HEK293 (cell line): ENCODE measurements at regions of chr22 and their contacts with region 1.

Region 1: DNA sequence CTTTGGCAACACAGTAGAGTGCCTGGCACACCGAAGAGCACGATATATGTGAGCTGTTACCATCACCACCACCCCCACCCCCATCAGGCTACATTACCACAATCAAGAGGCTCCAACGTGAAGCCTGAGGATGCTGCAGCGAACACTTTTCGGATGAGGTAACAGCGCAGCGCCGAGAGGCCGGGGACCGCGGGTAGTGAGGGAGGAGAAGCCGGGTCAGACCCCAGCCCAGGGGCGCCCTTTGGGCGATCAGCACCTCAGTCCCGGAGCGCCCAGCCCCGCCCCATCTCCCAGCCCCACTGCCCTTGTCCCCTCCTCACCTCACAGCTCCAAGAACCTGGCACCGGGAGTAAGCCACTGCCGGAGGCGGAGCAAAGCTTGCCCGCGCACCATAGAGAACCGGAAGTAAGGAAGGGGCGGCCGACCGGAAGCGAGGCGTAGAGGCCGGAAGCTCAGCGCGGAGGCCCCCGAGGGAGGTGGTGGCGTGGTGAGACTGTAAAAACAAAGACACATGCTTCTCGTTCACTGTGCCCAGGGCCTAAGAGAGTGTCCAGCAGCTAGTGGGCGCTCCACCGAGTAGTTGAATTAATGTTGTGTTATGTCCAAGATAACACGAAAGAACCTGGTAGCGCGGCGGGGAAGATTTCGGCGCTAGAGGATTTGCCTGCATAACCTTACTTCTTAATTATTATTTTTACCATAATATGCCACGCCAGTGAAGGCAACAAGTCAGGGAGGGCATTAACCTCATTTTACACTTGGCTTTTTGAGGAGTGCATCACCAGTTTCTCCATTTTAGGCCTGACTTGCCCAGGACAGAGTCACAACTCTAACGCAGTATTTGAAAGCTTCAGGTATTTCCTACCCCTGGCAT is at the start of gene THOC5:
- H3K4me3 ChIP-seq: peak within 1 kb of the TSS; percentile 67
- H3K27ac ChIP-seq: peak within 1 kb of the TSS; percentile 91
- H3K4me1 ChIP-seq: peaks cover 7% of the 10 kb centered on the region
- CTCF ChIP-seq: peak; percentile 96

Region 2: DNA sequence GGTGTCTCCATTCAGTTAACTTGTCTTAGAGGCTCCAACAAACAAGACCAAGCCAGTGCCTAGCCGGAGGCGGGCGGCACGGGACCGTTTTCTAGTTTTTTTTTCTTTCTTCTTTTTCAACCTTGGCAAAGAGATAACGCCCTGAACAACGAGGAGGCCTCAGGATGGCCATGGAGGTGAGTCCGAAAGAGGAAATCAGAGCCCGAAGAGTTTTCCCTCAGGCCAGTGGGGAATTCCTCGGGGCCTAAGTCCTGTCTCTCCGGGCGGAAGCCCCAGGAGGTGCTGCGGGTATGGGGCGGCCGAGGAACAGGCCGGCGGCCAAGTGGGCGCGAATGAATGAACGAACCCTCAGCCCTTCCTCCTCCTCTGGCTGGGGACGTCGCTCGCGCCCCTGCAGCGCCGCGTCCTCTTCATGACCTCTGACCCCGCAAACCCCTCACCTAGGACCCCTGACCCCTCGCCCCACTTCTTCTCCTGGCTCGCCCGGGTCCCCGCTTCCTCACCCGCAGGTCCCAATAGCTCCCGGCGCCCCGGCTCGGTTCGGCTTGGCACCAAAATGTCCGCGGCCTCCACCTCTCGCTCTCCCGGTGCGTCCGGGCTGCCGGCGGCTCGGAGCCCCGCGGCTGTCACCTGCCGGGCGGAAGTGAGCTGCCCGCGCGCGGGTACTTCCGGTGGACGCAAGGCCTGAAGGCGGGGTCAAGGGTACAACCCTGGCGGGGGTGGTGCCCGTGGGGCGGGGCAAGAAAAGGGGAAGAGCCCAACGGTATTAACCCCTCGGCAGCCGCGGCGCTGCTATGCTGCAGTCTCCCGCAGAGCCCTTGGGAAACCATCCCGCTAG is 165.4 kb before region 1 on chr22 and contains the start of gene AP1B1:
- CTCF ChIA-PET with region 1: interaction called, 6 read pairs
- POLR2A ChIA-PET with region 1: interaction called, 11 read pairs
- H3K4me3 ChIP-seq: peak within 1 kb of the TSS; percentile 93
- H3K27ac ChIP-seq: peak within 1 kb of the TSS; percentile 63
- H3K4me1 ChIP-seq: peaks cover 6% of the 10 kb centered on the region; the same call in 1 of the 2 replicates
- CTCF ChIP-seq: peak; percentile 66

Region 3: DNA sequence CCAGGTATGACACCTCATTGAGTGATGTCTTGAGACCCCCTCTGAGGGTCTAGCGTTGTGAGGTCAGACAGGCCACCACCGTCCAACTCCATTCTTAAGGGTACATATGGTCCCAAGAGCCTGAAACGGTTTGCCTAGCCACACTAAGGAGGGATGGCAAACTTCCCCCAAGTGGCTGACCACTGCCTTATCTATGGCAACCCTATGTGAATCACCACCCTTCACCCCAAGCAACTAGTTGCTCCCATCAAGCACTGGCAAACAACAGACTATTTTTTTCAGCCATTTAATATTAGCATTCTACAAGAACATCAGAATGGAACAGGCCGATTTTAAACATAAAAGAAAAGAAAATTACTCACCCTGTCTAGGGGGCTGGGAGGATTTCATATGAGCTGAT is 22.9 kb before region 1 on chr22:
- CTCF ChIA-PET with region 1: interaction called, 10 read pairs
- POLR2A ChIA-PET with region 1: interaction called, 5 read pairs
- H3K4me3 ChIP-seq: no peak overlapping the region
- H3K27ac ChIP-seq: no peak overlapping the region
- H3K4me1 ChIP-seq: no peaks in the 10 kb centered on the region
- CTCF ChIP-seq: no peak

Region 4: DNA sequence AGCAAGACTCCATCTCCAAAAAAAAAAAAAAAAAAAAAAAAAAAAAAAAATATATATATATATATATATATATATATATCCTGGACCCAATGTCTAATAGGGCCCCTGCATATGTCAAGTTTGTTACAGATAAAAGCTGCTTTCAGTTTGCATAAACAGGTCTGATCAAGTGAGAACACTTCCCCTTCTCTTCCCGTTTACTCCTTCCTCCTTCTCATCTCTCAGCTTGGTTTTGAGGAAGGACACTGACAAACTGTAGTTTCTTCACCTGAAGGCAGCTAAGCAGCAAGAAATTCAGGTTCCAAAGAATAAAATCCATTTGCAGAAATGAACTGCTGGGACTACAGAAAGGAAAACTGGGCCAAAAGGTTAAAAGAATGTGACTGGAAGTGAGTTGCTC is 11.7 kb before region 1 on chr22:
- CTCF ChIA-PET with region 1: interaction called, 13 read pairs
- POLR2A ChIA-PET with region 1: interaction called, 20 read pairs
- H3K4me3 ChIP-seq: no peak overlapping the region
- H3K27ac ChIP-seq: no peak overlapping the region
- H3K4me1 ChIP-seq: no peaks in the 10 kb centered on the region
- CTCF ChIP-seq: no peak

Region 5: DNA sequence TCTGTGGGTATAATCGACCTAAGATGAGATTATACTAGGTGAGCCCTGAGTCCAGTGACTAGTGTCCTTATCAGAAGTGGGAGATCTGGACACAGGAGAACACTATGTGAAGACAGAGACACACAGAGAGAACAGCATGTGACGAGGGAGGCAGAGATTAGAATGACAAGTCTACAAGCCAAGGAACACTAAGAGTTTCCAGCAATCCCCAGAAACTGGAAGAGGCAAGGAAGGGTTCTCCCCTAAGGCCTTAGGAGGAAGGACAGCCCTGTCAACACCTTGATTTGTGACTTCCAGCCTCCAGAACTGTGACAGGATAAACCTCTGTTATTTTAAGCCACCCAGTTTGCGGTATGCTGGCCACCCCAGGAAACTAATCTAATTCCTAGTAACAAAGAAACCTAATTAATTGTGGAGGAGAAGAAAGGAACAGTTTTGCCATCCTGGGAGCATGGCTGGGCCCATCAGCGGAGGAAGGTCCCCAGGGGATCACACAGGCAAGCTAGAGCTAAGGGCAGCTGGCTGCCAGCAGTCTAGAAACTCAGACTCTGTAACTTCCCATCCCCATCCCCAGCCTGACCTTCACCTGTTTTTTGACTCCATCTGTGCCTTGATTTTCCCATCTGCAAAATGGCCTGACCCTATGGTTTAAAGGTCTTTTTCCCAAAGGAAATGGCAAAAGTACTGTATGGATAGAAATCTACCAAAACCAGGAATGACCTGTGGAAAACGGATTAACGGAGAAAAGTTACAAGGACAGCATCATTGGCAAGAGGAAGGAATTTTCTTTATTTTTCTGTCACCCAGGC is 10.3 kb after region 1 on chr22:
- CTCF ChIA-PET with region 1: interaction called, 17 read pairs
- POLR2A ChIA-PET with region 1: interaction called, 9 read pairs
- H3K4me3 ChIP-seq: no peak overlapping the region
- H3K27ac ChIP-seq: no peak overlapping the region
- H3K4me1 ChIP-seq: no peaks in the 10 kb centered on the region
- CTCF ChIP-seq: no peak

Region 6: DNA sequence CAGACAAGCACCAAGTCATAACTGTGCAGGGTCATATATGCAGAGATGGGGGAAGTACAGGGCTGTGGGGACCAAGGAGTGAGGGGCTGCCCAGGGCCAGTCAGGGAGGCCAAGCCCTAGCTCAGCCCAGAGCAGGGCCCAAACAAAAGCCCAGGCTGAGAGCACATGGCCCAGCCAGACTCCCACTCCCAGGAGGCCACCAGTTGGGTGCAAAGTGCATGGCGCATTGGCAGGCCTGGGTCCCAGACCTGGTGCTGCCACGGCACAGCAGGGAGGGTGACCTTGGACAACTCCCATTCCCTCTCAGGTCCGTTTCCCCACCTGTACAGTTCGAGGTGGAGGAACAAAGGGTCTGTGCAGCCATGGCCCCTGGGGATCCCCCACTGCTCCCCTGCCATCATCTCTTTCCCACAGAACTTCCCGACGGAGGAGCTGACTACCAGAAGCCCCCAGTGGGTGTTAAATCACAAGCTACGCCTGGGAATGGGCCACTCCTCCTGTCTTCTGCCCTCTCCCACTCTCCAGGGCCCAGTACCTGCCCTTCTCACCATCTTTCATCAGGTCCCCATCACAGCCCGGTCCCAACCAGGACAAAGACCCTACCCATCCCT is 26.7 kb after region 1 on chr22:
- CTCF ChIA-PET with region 1: interaction called, 4 read pairs
- POLR2A ChIA-PET with region 1: interaction called, 19 read pairs
- H3K4me3 ChIP-seq: peak overlapping the region; percentile 83
- H3K27ac ChIP-seq: peak overlapping the region; percentile 32; the same call in 1 of the 2 replicates
- H3K4me1 ChIP-seq: no peaks in the 10 kb centered on the region
- CTCF ChIP-seq: no peak